Calu3 (cell line): ENCODE measurements at regions of chr17 and their contacts with region 1.

Region 1: GRCh38 chr17:48908047-48908843 is at the start of gene UBE2Z:
- DNase-seq: peak; percentile 96
- H3K4me3 Mint-ChIP-seq: peak within 1 kb of the TSS; percentile 88
- H3K27ac Mint-ChIP-seq: peak within 1 kb of the TSS; percentile 94
- H3K4me1 Mint-ChIP-seq: peaks cover 36% of the 10 kb centered on the region
- H3K27me3 Mint-ChIP-seq: no peaks in the 10 kb centered on the region
- CTCF ChIP-seq: no peak
- total RNA-seq, gene UBE2Z: 179 and 182 TPM in 2 replicates

Region 2: GRCh38 chr17:48892940-48893645 is 15.2 kb before region 1 on chr17:
- CTCF ChIA-PET with region 1: interaction called, 18 read pairs
- intact Hi-C with region 1: no loop called
- DNase-seq: no peak
- H3K4me3 Mint-ChIP-seq: peak overlapping the region; percentile 98
- H3K27ac Mint-ChIP-seq: peak overlapping the region; percentile 98
- H3K4me1 Mint-ChIP-seq: peaks cover 7% of the 10 kb centered on the region
- H3K27me3 Mint-ChIP-seq: peaks cover 8% of the 10 kb centered on the region
- CTCF ChIP-seq: no peak